Ascending aorta (tissue), 2 donors: ENCODE measurements at regions of chr15 and their contacts with region 1.

Region 1: DNA sequence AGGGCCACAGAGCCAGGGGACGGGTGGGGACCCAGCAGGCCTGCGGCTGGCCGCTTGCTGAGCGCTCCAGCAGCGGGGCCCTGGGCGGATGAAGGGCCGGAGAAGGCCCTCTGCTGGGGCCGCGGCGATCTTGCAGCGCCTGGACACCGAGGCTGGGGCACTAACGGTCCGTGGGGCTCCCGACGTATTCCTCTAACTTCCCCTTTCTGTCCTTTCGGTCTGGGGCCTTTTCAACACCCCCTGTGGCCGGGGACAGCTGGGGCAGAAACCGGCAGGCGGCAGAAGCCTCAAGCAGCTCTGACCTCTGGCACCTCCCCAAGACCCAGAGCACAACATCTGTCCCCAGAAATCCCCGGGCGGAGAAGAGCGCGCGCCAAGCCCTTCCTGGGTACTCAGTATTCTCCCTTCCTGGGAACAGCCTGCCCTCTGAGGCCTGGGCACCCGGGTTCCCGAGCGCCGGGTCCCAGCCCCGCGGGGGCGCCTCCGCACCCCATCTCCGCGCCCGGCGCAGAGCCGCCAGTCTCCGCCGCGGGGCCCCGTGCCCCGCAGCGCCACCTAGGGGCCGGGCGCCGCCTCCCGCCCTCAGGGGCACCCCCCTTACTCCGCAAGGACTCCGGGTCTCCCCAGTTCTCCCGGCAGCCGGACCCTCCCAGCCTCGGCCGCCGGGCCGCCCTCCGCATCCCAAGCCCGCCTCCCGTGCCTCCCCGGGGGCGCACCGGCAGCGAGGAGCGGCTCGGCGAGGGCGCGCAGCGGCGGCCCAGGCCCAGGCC is 582 bp upstream of the SLCO3A1 start:
- DNase-seq: peak; percentile 31 to 86
- H3K4me3 ChIP-seq: peak overlapping the region; percentile 82 to 88
- H3K27ac ChIP-seq: peak overlapping the region; percentile 95 to 98
- H3K4me1 ChIP-seq: peaks cover 13 to 26% of the 10 kb centered on the region in 2 donors
- H3K27me3 ChIP-seq: no peaks in the 10 kb centered on the region
- CTCF ChIP-seq: peak; percentile 61 to 88 (median 70)

Region 2: GRCh38 chr15:91553196-91553854 is 299.6 kb before region 1 on chr15:
- intact Hi-C with region 1: no loop called
- DNase-seq: no peak
- H3K4me3 ChIP-seq: no peak overlapping the region
- H3K27ac ChIP-seq: no peak overlapping the region
- H3K4me1 ChIP-seq: no peaks in the 10 kb centered on the region
- H3K27me3 ChIP-seq: no peaks in the 10 kb centered on the region
- CTCF ChIP-seq: no peak

Region 3: DNA sequence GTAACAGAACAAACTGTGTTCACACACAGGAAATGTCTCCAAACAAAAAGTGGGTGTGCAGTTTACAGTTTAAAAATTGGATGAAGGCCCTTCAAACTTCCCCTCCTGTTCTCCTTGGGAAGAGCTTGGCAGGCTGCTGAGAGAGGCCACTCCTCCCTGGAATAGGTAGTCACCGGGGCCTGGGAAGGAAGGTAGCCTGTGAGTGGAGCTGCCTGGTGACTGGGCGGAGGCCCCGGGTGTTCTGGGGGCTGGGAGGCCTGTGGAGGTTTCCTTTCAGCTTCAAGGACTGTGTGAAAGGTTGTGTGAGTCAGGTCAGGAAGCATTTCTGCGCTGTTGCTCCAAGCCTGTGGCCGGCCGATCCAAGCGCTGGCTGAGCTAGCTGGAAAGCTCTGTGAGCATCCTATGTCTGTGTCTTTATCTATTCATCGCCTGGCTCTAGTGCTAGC is 14.7 kb after region 1 on chr15:
- intact Hi-C with region 1: loop called (anchors 2 kb)
- DNase-seq: peak; percentile 59 to 92
- H3K4me3 ChIP-seq: peak overlapping the region in 1 of 2 donors; percentile 25
- H3K27ac ChIP-seq: peak overlapping the region; percentile 77 to 90
- H3K4me1 ChIP-seq: peaks cover 11 to 43% of the 10 kb centered on the region in 2 donors
- H3K27me3 ChIP-seq: no peaks in the 10 kb centered on the region
- CTCF ChIP-seq: no peak

Region 4: GRCh38 chr15:91885714-91886270 is 32.9 kb after region 1 on chr15:
- intact Hi-C with region 1: no loop called
- DNase-seq: no peak
- H3K4me3 ChIP-seq: no peak overlapping the region
- H3K27ac ChIP-seq: no peak overlapping the region
- H3K4me1 ChIP-seq: peaks cover 0 to 5% of the 10 kb centered on the region in 2 donors
- H3K27me3 ChIP-seq: no peaks in the 10 kb centered on the region
- CTCF ChIP-seq: no peak

Region 5: GRCh38 chr15:91942676-91943576 is 90.0 kb after region 1 on chr15:
- intact Hi-C with region 1: loop called (anchors 2 kb)
- DNase-seq: peak; percentile 51 to 90
- H3K4me3 ChIP-seq: peak overlapping the region; percentile 2 to 18
- H3K27ac ChIP-seq: peak overlapping the region; percentile 12 to 40
- H3K4me1 ChIP-seq: peaks cover 13 to 57% of the 10 kb centered on the region in 2 donors
- H3K27me3 ChIP-seq: no peaks in the 10 kb centered on the region
- CTCF ChIP-seq: no peak

Region 6: DNA sequence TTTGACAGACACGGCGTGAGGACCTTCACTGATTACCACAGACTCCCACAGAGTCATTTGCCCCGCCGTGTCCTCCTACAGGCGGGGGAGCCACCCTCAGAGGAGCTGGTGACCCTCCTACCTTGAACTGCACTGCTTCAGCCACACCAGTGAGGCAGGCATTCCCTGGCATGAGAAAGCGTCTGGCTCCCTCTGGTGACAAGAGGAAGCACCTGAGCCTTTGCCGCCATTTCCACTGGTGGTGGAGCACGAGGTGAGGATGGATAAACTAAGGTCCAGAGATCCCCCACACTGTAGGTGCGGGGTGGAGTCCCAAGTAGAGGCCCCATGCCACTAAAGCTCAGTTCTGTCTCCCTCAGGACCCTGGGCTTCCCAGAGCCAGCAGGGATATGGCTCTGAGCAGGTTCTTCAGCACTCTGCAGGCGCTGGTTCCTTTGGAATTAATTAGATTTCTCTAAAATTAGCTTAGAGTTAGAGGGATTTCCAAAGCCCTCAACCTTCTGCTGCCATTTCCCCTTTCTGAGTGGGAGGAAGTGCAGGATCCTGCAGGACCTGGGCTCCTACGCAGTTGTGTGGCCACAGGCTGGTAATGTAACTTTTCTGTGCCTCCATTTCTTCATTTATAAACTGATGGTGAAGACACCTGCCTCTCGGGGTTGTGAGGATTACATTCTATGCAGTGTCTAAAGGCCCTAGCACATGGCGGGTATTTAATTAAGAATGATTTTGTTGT is 224.6 kb after region 1 on chr15:
- intact Hi-C with region 1: loop called (anchors 2 kb)
- DNase-seq: peak in 1 of 2 donors; percentile 86
- H3K4me3 ChIP-seq: no peak overlapping the region
- H3K27ac ChIP-seq: no peak overlapping the region
- H3K4me1 ChIP-seq: peaks cover 0 to 8% of the 10 kb centered on the region in 2 donors
- H3K27me3 ChIP-seq: no peaks in the 10 kb centered on the region
- CTCF ChIP-seq: peak; percentile 74 to 84 (median 78)